ENCODE measurements at regions of chr2 and their contacts with region 1.

Region 1: GRCh38 chr2:9142551-9143263 is 63.9 kb upstream of the ASAP2 start:
- DNase-seq: peak; percentile 78
- H3K4me3 ChIP-seq: peak overlapping the region in 1 of 3 experiments; percentile 6
- H3K27ac ChIP-seq: no peak overlapping the region
- H3K4me1 ChIP-seq: peaks cover 5% of the 10 kb centered on the region
- H3K27me3 ChIP-seq: no peaks in the 10 kb centered on the region
- CTCF ChIP-seq: peak; percentile 95 to 96
- POLR2A ChIP-seq: no peak

Region 2: DNA sequence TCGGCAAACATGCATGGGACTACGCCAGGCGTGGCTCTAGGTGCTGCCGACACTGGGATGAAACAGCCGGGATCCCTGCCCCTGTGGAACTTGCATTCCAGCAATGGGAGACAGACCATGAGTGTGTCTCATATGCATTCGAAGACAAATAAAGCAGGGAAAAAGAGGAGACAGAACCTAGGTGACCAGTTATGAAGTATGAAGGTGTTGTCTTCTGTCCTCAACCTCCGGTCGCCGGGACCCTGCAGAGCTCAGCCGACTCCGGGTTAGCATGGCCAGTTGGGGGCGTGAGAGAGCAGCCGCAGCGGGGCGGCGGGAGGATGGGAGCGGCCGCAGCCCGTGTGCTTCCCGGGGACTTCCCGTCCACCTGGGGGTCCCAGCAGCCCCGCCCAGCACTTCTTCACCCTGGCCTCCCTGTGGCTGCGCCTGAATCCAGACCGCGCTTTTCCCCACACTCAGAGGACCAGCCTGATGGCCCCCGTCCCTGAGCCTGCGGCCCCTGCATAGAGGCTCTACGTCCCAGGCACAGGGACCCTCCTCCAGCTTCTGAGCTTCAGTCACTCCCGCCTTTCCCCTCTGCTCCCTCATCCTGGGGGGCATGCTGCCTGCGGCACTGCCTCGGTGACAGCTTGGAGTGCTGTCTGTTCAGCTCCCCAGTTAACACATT is 449.4 kb before region 1 on chr2:
- CTCF ChIA-PET with region 1: interaction called, 13 read pairs
- POLR2A ChIA-PET with region 1: no interaction called
- dilution Hi-C with region 1: no loop called
- intact Hi-C with region 1: loop called (anchors 5 kb)
- DNase-seq: peak; percentile 7
- H3K4me3 ChIP-seq: no peak overlapping the region
- H3K27ac ChIP-seq: no peak overlapping the region
- H3K4me1 ChIP-seq: no peaks in the 10 kb centered on the region
- H3K27me3 ChIP-seq: peaks cover 0 to 2% of the 10 kb centered on the region in 2 experiments
- CTCF ChIP-seq: peak; percentile 58 to 77
- POLR2A ChIP-seq: no peak

Region 3: GRCh38 chr2:9106331-9107192 is 36.1 kb before region 1 on chr2:
- CTCF ChIA-PET with region 1: interaction called, 8 read pairs
- POLR2A ChIA-PET with region 1: no interaction called
- dilution Hi-C with region 1: no loop called
- intact Hi-C with region 1: loop called (anchors 2 kb)
- DNase-seq: peak; percentile 97
- H3K4me3 ChIP-seq: no peak overlapping the region
- H3K27ac ChIP-seq: peak overlapping the region; percentile 25
- H3K4me1 ChIP-seq: peaks cover 15% of the 10 kb centered on the region
- H3K27me3 ChIP-seq: no peaks in the 10 kb centered on the region
- CTCF ChIP-seq: no peak
- POLR2A ChIP-seq: no peak

Region 4: DNA sequence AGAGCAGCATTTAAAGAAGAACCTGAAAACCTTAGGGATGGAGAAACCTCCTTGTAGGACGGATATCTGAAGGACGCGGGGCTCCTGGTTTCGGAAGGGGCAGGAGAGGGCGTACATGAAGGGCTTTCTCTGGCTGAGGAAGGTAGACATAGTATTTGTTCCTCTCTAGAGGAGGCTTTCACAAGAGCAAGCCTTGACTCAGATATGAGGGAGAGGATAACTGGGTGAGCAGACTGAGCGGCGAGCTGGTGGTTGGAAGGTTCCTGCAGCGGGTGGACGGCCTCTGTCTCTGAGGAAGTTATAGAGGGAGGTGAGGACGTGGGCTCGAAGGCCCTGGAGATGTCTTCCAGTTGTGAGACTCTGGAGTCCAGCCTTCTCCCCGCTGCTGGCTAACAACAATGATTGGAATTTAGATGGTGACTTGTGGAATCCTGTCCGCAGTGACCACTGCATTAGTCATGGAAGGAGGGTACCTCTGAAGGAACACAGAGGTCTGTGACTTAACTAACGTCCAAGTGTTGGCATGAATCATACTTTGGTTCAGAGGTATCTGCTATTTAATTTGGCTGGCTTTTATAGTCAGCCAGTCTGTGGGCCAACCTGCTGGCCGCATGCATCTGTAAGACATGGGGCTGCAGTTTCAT is 144.8 kb after region 1 on chr2:
- CTCF ChIA-PET with region 1: no interaction called
- POLR2A ChIA-PET with region 1: no interaction called
- dilution Hi-C with region 1: no loop called
- intact Hi-C with region 1: loop called (anchors 1 kb)
- DNase-seq: peak; percentile 93
- H3K4me3 ChIP-seq: no peak overlapping the region
- H3K27ac ChIP-seq: peak overlapping the region; percentile 86
- H3K4me1 ChIP-seq: peaks cover 39% of the 10 kb centered on the region
- H3K27me3 ChIP-seq: no peaks in the 10 kb centered on the region
- CTCF ChIP-seq: peak in 1 of 2 donors; percentile 33
- POLR2A ChIP-seq: peak; percentile 76

Region 5: GRCh38 chr2:9373077-9373875 is 230.6 kb after region 1 on chr2:
- CTCF ChIA-PET with region 1: interaction called, 24 read pairs
- POLR2A ChIA-PET with region 1: no interaction called
- dilution Hi-C with region 1: no loop called
- intact Hi-C with region 1: loop called (anchors 2 kb)
- DNase-seq: no peak
- H3K4me3 ChIP-seq: no peak overlapping the region
- H3K27ac ChIP-seq: no peak overlapping the region
- H3K4me1 ChIP-seq: peaks cover 8% of the 10 kb centered on the region
- H3K27me3 ChIP-seq: no peaks in the 10 kb centered on the region
- CTCF ChIP-seq: no peak
- POLR2A ChIP-seq: no peak

Region 6: DNA sequence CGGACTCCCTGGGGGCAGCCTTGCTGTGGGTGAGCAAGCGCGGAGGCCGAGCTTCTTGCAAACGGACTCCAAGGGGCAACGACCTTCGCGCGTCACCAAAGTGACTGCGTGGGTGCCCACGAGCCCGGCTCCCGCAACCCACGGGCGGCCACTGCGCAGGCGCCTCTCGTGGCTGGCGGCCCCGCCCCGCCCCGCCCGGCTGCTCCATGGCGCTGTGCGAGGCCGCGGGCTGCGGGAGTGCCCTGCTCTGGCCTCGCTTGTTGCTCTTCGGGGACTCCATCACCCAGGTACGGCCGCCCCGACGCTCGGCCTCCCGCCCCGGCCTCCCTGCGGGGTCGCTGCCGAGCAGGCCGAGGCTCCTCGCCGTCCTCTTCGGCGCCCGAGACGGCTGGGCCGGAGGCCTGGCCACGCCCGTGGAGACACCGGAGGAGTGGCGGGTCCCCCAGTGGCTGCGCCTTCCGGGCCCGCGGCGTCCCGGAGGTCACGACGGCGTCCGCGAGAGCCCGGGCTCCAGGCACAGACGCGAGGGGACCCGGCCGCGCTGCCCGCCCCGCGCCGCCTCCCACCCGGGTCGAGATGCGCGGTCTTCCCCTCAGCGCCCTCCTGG is 331.8 kb after region 1 on chr2 and contains the start of gene IAH1:
- CTCF ChIA-PET with region 1: no interaction called
- POLR2A ChIA-PET with region 1: no interaction called
- dilution Hi-C with region 1: no loop called
- intact Hi-C with region 1: loop called (anchors 5 kb)
- DNase-seq: peak; percentile 60
- H3K4me3 ChIP-seq: peak within 1 kb of the TSS; percentile 54 to 86 (median 73)
- H3K27ac ChIP-seq: peak within 1 kb of the TSS; percentile 70
- H3K4me1 ChIP-seq: peaks cover 7% of the 10 kb centered on the region
- H3K27me3 ChIP-seq: no peaks in the 10 kb centered on the region
- CTCF ChIP-seq: no peak
- POLR2A ChIP-seq: peak; percentile 66
- total RNA-seq, gene IAH1: 39.9 and 44.0 TPM in 2 replicates